A549 (cell line): ENCODE measurements at regions of chr17 and their contacts with region 1.

Region 1: DNA sequence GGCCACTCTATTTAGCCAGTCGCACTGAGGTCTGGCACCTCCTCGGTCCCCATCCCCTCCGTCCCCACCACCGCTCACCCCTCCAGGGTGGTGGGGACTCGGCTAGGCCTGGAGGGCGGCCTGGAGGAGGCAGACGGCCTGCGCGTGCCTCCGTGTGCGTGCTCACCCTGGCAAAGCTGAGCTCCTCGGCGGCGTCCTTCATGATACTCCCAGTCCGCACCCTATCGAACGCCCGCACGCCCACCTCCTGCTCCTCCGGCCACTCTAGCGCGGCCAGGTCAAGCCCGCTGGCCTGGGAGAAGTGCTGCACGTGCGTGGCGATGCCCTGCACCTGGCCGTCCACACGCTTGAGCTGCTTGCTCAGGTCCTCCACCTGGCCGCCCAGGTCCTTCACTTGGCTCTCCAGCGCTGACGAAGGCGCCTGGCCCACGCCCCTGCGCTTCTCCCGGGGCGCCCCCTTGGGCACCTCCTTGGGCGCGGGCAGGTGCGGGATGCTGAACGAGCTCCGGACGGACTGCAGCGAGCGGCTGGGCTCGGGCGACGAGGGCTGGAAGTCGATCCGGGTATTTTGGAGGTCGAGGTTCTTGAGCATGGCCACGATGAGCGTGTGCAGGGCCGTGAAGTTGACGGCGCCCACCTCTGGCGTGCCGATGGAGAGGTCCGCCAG is 644 bp downstream of the QRICH2 start:
- DNase-seq: no peak
- ATAC-seq: no peak
- H3K4me3 ChIP-seq: no peak overlapping the region
- H3K27ac ChIP-seq: no peak overlapping the region
- H3K4me1 ChIP-seq: no peaks in the 10 kb centered on the region
- CTCF ChIP-seq: no peak
- EP300 ChIP-seq: no peak
- POLR2A ChIP-seq: no peak
- RAD21 ChIP-seq: no peak

Region 2: GRCh38 chr17:74417178-74418045 is 1890.0 kb before region 1 on chr17:
- CTCF ChIA-PET with region 1: no interaction called
- POLR2A ChIA-PET with region 1: no interaction called
- DNase-seq: peak; percentile 90 to 98
- ATAC-seq: peak; percentile 98 to 99
- H3K4me3 ChIP-seq: 0 out of 3 replicates have a peak overlapping the region, but pooled peaks have one; percentile 6
- H3K27ac ChIP-seq: peak overlapping the region; percentile 70 to 86
- H3K4me1 ChIP-seq: peaks cover 28% of the 10 kb centered on the region
- CTCF ChIP-seq: no peak
- EP300 ChIP-seq: no peak
- POLR2A ChIP-seq: no peak
- RAD21 ChIP-seq: peak in 1 of 2 experiments; percentile 20; a peak in 1 of 5 replicates

Region 3: DNA sequence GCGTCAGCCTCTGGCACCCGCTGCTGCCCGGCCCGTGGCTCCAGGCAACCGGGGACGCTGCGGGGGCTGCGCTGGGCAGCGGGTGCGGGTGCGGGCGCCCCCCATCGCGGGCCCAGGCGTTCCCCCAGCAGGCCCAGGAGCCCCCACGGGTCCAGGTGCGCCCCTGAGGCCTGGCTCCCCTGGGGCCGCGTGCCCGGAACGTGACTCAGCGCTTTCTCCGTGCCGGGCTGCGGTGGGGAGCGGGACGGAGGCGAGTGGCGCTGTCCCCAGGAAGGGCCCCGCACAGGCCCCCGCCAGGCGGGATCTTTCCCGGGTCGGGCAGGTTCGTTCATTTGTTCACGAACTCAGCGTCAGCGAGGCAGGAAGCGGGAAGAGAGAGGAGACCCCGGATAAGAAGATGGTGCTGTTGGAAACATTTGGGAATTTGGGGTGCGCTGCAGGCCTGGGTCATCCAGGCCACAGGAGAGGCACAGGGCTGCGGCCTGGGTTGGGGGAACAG is 185.5 kb before region 1 on chr17:
- CTCF ChIA-PET with region 1: interaction called, 107 read pairs
- POLR2A ChIA-PET with region 1: no interaction called
- DNase-seq: no peak
- ATAC-seq: peak in 1 of 2 experiments; percentile 3; a peak in 2 of 6 replicates
- H3K4me3 ChIP-seq: peak overlapping the region; percentile 2; the same call in 1 of the 3 replicates
- H3K27ac ChIP-seq: peak overlapping the region; percentile 68 to 90
- H3K4me1 ChIP-seq: peaks cover 5% of the 10 kb centered on the region
- CTCF ChIP-seq: no peak
- EP300 ChIP-seq: no peak
- POLR2A ChIP-seq: no peak
- RAD21 ChIP-seq: no peak

Region 4: GRCh38 chr17:76196675-76197074 is 110.8 kb before region 1 on chr17:
- CTCF ChIA-PET with region 1: no interaction called
- POLR2A ChIA-PET with region 1: no interaction called
- DNase-seq: no peak
- ATAC-seq: no peak
- H3K4me3 ChIP-seq: no peak overlapping the region
- H3K27ac ChIP-seq: no peak overlapping the region
- H3K4me1 ChIP-seq: no peaks in the 10 kb centered on the region
- CTCF ChIP-seq: no peak
- EP300 ChIP-seq: no peak
- POLR2A ChIP-seq: no peak
- RAD21 ChIP-seq: no peak

Region 5: GRCh38 chr17:76331083-76331482 is 23.7 kb after region 1 on chr17:
- CTCF ChIA-PET with region 1: interaction called, 12 read pairs
- POLR2A ChIA-PET with region 1: no interaction called
- DNase-seq: no peak
- ATAC-seq: no peak
- H3K4me3 ChIP-seq: no peak overlapping the region
- H3K27ac ChIP-seq: no peak overlapping the region
- H3K4me1 ChIP-seq: no peaks in the 10 kb centered on the region
- CTCF ChIP-seq: no peak
- EP300 ChIP-seq: no peak
- POLR2A ChIP-seq: no peak
- RAD21 ChIP-seq: no peak

Region 6: DNA sequence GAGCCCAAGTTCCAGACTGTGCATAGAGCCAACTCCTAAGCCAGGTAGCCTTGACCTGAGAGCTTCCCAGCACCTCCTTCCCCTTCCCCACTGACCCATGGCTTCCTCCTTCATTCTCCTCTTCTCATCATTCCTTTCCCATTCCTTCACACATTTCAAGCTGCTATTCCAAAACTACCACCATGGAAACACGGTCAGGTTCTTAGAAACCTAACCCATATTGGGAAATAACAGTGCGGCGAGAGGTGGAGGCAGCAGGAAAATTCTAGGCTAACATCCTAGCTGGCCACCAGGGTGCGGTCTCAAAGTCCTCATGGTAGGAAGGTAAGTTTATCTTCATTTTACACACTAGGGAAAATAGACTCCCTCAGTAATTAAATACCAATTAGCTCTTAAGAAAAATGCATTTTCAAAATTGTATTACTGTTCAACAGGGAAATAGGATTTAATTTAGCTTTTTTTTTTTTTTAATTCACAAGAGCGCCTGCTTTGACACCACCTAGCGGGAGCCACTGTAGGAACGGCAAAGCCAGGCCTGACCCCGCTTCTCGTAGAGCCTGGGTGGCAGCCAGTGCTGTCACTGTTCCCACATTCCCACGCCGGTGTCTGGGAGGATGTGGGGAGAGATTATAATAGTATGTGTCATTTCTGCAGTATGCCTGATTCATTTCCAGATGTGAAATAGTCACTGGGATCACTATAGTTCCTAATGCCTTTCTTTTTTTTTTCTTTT is 63.0 kb after region 1 on chr17:
- CTCF ChIA-PET with region 1: interaction called, 14 read pairs
- POLR2A ChIA-PET with region 1: no interaction called
- DNase-seq: peak; percentile 62 to 79
- ATAC-seq: peak; percentile 79 to 83
- H3K4me3 ChIP-seq: no peak overlapping the region
- H3K27ac ChIP-seq: no peak overlapping the region
- H3K4me1 ChIP-seq: peaks cover 6% of the 10 kb centered on the region; the same call in 2 of the 3 replicates
- CTCF ChIP-seq: peak; percentile 92
- EP300 ChIP-seq: no peak
- POLR2A ChIP-seq: no peak
- RAD21 ChIP-seq: peak; percentile 24 to 27; a peak in 2 of 5 replicates

Region 7: GRCh38 chr17:76408052-76408849 is 100.8 kb after region 1 on chr17:
- CTCF ChIA-PET with region 1: interaction called, 13 read pairs
- POLR2A ChIA-PET with region 1: no interaction called
- DNase-seq: peak; percentile 73 to 83
- ATAC-seq: peak; percentile 76 to 86
- H3K4me3 ChIP-seq: no peak overlapping the region
- H3K27ac ChIP-seq: no peak overlapping the region
- H3K4me1 ChIP-seq: no peaks in the 10 kb centered on the region
- CTCF ChIP-seq: peak; percentile 98
- EP300 ChIP-seq: no peak
- POLR2A ChIP-seq: no peak
- RAD21 ChIP-seq: peak; percentile 90 to 92

Region 8: GRCh38 chr17:76506408-76507349 is 199.2 kb after region 1 on chr17:
- CTCF ChIA-PET with region 1: interaction called, 11 read pairs
- POLR2A ChIA-PET with region 1: no interaction called
- DNase-seq: peak; percentile 71 to 95
- ATAC-seq: peak; percentile 80 to 90
- H3K4me3 ChIP-seq: no peak overlapping the region
- H3K27ac ChIP-seq: peak overlapping the region; percentile 52 to 73; a peak in 5 of 6 replicates
- H3K4me1 ChIP-seq: peaks cover 9% of the 10 kb centered on the region
- CTCF ChIP-seq: peak; percentile 98
- EP300 ChIP-seq: no peak
- POLR2A ChIP-seq: no peak
- RAD21 ChIP-seq: peak; percentile 99